ENCODE measurements at regions of chr10 and their contacts with region 1.

Region 1: GRCh38 chr10:52215745-52216361 is 98.2 kb upstream of the DKK1 start:
- DNase-seq: peak in 3 of 5 donors; percentile 23 to 32 (median 25)
- ATAC-seq: peak in 3 of 4 donors; percentile 44 to 60 (median 55)
- H3K4me3 ChIP-seq: no peak overlapping the region
- H3K27ac ChIP-seq: peak overlapping the region in 1 of 12 donors; percentile 17
- H3K4me1 ChIP-seq: peaks cover 0 to 11% (median 0%) of the 10 kb centered on the region in 12 donors
- H3K27me3 ChIP-seq: no peaks in the 10 kb centered on the region
- CTCF ChIP-seq: peak; percentile 56 to 79 (median 75)
- POLR2A ChIP-seq: no peak

Region 2: GRCh38 chr10:50988792-50989191 is 1227.1 kb before region 1 on chr10:
- intact Hi-C with region 1: loop called in 1 of 10 experiments (anchors 5 kb)
- DNase-seq: no peak
- ATAC-seq: no peak
- H3K4me3 ChIP-seq: peak overlapping the region in 8 of 12 donors; percentile 15 to 90 (median 77)
- H3K27ac ChIP-seq: peak overlapping the region in 9 of 12 donors; percentile 28 to 97 (median 41)
- H3K4me1 ChIP-seq: peaks cover 0 to 21% (median 0%) of the 10 kb centered on the region in 12 donors
- H3K27me3 ChIP-seq: peaks cover 0 to 29% (median 0%) of the 10 kb centered on the region in 9 donors
- CTCF ChIP-seq: peak; percentile 18 to 60 (median 44)
- POLR2A ChIP-seq: no peak

Region 3: DNA sequence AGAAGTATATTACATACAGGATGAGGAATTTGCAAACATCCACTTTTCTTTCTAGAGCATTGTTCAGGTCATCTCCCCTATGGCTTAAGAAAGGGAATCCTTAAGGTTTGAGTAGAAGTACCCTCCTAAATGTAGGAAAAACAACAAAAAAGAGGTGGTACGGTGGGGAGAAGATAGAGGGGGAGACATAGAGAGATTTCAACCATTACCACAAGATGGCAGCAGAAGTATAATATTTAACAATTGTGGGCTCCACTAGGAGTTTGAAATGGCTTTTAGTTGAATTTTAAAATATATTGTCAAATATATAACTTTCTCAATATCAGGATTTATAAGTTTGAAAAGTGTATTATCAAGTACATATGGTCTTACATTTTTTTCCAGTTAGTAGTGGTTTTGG is 1214.3 kb before region 1 on chr10:
- intact Hi-C with region 1: loop called in 7 of 10 experiments (anchors 5 to 10 kb)
- DNase-seq: no peak
- ATAC-seq: peak in 3 of 4 donors; percentile 55 to 70 (median 67)
- H3K4me3 ChIP-seq: no peak overlapping the region
- H3K27ac ChIP-seq: peak overlapping the region in 5 of 12 donors; percentile 17 to 53 (median 26)
- H3K4me1 ChIP-seq: peaks cover 0 to 63% (median 6%) of the 10 kb centered on the region in 12 donors
- H3K27me3 ChIP-seq: no peaks in the 10 kb centered on the region
- CTCF ChIP-seq: peak; percentile 38 to 75 (median 59)
- POLR2A ChIP-seq: no peak

Region 4: DNA sequence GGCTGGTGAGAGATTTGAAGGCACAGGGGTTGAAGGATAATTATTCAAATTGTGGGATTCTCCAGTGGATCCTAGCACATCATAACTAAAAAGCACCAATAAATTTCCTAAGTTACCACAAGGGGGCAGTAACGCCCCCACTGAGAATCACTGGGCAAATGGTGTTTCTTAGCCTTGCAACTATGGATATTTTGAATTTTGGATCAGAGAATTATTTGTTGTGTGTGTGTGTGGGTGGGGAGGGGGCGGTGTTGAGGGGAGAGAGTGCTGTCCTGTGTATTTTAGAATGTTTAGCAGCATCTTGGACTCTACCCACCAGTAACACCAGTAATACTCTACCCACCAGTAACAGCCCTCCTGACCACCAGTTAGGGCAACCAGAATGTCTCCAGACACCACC is 1204.9 kb before region 1 on chr10:
- intact Hi-C with region 1: loop called in 4 of 10 experiments (anchors 5 to 10 kb)
- DNase-seq: no peak
- ATAC-seq: peak in 1 of 4 donors; percentile 50
- H3K4me3 ChIP-seq: no peak overlapping the region
- H3K27ac ChIP-seq: no peak overlapping the region
- H3K4me1 ChIP-seq: peaks cover 0 to 20% (median 5%) of the 10 kb centered on the region in 12 donors
- H3K27me3 ChIP-seq: no peaks in the 10 kb centered on the region
- CTCF ChIP-seq: peak; percentile 64 to 80 (median 72)
- POLR2A ChIP-seq: no peak

Region 5: DNA sequence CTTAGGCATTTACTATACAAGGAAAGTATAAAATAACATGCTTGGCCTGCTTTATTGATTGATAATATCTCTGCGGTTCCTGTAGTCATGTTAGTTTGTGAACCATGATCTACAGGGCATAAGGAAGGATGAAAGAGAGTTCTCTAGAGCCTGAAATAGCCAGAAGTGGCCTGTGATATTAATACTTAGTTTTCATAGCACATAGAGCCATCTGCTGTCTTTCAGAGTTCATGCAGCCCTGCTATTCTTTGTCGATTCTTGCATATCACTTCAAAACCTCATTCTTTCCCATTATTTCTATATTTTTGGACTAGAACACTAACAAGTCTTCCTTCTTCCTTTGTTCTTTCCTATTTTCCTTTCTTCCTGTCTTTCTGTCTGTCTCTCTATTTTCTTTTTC is 1168.0 kb before region 1 on chr10:
- intact Hi-C with region 1: loop called in 1 of 10 experiments (anchors 10 kb)
- DNase-seq: no peak
- ATAC-seq: peak; percentile 44 to 81 (median 78)
- H3K4me3 ChIP-seq: no peak overlapping the region
- H3K27ac ChIP-seq: peak overlapping the region in 2 of 12 donors; percentile 15 to 31
- H3K4me1 ChIP-seq: peaks cover 0 to 50% (median 8%) of the 10 kb centered on the region in 12 donors
- H3K27me3 ChIP-seq: no peaks in the 10 kb centered on the region
- CTCF ChIP-seq: peak in 9 of 12 donors; percentile 24 to 62 (median 48)
- POLR2A ChIP-seq: no peak

Region 6: DNA sequence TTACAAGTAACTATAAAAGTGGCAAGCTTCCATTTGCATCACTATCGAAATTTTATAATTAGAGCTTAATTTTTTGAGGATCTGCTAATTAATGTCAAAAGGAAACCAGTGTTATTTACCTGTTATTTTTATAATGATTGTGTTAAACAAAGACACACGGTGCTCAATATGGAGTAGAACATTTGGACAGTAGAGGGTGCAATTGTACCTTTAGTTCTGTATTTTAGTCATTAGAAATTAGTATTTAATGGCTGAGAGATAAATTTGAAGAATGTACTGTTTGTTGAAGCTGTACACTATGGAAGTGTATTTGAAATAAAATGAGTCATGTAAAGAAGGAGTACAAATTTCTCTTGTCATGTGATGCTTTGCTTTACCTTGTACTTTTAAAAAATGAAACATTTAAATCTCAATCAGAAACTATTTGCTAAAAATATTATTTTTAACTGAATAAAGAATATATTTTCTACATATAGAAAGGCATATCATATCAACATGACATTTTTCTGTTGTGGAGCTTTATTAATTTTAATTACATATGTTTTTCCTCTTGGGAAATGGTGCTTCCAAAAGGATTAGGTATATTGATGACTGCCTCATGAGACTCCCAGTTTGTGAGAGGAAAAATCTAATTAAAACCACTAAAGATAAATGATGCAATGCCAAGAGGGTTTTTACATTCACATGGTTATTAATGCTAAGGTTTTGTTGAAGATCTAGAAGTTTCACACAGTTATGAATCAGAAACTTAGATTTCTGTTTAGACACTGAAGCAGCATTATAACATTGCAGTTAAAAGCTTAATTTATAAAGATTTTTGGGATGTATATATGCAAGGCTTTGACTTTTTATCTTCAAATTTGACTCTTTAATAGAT is 1152.0 kb before region 1 on chr10:
- intact Hi-C with region 1: loop called in 4 of 10 experiments (anchors 5 to 10 kb)
- DNase-seq: no peak
- ATAC-seq: peak in 2 of 4 donors; percentile 51 to 53
- H3K4me3 ChIP-seq: no peak overlapping the region
- H3K27ac ChIP-seq: no peak overlapping the region
- H3K4me1 ChIP-seq: peaks cover 0 to 16% (median 2%) of the 10 kb centered on the region in 12 donors
- H3K27me3 ChIP-seq: no peaks in the 10 kb centered on the region
- CTCF ChIP-seq: peak; percentile 27 to 75 (median 60)
- POLR2A ChIP-seq: no peak

Region 7: GRCh38 chr10:51986516-51986915 is 229.3 kb before region 1 on chr10:
- intact Hi-C with region 1: loop called in 1 of 10 experiments (anchors 10 kb)
- DNase-seq: no peak
- ATAC-seq: no peak
- H3K4me3 ChIP-seq: no peak overlapping the region
- H3K27ac ChIP-seq: no peak overlapping the region
- H3K4me1 ChIP-seq: peaks cover 0 to 18% (median 0%) of the 10 kb centered on the region in 12 donors
- H3K27me3 ChIP-seq: no peaks in the 10 kb centered on the region
- CTCF ChIP-seq: no peak
- POLR2A ChIP-seq: no peak

Region 8: DNA sequence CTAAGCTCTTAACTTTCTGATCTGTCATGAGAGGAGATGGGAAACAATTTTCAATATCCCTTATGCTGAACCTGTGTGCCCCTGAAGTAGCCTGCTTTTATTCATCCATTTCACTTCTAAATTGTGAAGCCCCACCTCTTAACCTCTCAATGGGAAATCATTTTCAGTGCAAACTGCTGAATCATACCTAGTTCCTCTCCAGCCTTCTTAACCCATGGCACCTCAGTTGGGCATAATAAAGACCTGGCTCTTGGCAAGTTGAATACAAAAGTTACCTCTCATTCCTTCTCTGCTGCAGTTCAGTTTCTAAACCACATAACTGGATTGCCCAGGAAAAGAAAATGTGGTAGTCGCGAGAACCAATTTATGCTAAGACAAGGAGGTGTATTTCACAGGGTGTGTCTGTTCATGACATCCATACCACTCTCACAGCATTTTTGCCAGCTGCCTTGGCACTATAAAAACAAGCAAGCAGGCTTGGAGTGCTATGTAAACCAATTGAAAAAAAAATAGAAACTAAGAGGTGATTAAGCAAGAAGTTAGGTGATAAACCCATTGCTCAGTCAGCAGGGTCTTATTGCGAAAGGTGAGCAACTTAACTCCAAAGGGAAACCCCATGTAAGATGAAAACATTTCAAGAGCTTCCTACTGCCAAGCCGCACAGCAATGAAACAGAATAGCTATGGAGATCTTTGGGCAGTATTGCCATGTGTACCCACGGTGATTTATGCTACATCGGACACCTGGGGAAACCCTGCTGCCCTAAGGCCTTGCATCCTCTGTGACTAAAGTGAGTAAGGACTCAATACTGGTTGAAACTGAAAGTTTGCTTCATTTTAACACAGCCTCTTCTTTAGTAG is 41.2 kb after region 1 on chr10:
- intact Hi-C with region 1: no loop called
- DNase-seq: no peak
- ATAC-seq: no peak
- H3K4me3 ChIP-seq: no peak overlapping the region
- H3K27ac ChIP-seq: no peak overlapping the region
- H3K4me1 ChIP-seq: peaks cover 0 to 13% (median 3%) of the 10 kb centered on the region in 12 donors
- H3K27me3 ChIP-seq: no peaks in the 10 kb centered on the region
- CTCF ChIP-seq: no peak
- POLR2A ChIP-seq: no peak

Measured in heart left ventricle (tissue), 16 donors.